ENCODE measurements at regions of chr17 and their contacts with region 1.

Region 1: GRCh38 chr17:58200017-58200633 is 7.6 kb downstream of the EPX start:
- DNase-seq: peak; percentile 47 to 73 (median 71)
- H3K4me3 ChIP-seq: no peak overlapping the region
- H3K27ac ChIP-seq: no peak overlapping the region
- H3K4me1 ChIP-seq: peaks cover 0 to 3% (median 0%) of the 10 kb centered on the region in 4 experiments
- H3K27me3 ChIP-seq: peaks cover 0 to 20% (median 6%) of the 10 kb centered on the region in 5 experiments

Region 2: GRCh38 chr17:58148609-58149008 is 51.5 kb before region 1 on chr17:
- CTCF ChIA-PET with region 1: no interaction called
- POLR2A ChIA-PET with region 1: no interaction called
- DNase-seq: no peak
- H3K4me3 ChIP-seq: no peak overlapping the region
- H3K27ac ChIP-seq: no peak overlapping the region
- H3K4me1 ChIP-seq: peaks cover 5 to 16% (median 13%) of the 10 kb centered on the region in 4 experiments
- H3K27me3 ChIP-seq: peaks cover 0 to 2% (median 0%) of the 10 kb centered on the region in 5 experiments

Region 3: DNA sequence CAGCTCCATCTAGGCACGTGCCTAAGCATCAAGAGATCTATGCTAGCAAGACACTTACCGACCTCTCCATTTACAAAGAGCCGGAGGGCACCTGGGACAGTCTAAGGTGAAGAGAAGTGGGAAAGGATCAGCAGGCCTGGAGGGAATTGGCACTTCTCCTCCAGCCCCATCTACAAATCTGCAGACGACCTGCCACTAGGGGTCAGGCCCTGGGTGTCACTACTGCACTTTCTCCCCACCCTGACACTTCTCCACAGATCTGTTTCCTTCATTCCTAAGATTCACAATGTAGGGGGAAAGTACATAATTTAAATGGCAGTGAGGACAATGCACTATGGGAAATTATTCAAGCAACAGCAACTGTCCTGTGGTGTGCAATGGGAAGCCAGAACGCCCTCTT is 10.8 kb after region 1 on chr17:
- CTCF ChIA-PET with region 1: interaction called, 20 read pairs
- POLR2A ChIA-PET with region 1: no interaction called
- DNase-seq: no peak
- H3K4me3 ChIP-seq: no peak overlapping the region
- H3K27ac ChIP-seq: no peak overlapping the region
- H3K4me1 ChIP-seq: no peaks in the 10 kb centered on the region
- H3K27me3 ChIP-seq: no peaks in the 10 kb centered on the region

Region 4: DNA sequence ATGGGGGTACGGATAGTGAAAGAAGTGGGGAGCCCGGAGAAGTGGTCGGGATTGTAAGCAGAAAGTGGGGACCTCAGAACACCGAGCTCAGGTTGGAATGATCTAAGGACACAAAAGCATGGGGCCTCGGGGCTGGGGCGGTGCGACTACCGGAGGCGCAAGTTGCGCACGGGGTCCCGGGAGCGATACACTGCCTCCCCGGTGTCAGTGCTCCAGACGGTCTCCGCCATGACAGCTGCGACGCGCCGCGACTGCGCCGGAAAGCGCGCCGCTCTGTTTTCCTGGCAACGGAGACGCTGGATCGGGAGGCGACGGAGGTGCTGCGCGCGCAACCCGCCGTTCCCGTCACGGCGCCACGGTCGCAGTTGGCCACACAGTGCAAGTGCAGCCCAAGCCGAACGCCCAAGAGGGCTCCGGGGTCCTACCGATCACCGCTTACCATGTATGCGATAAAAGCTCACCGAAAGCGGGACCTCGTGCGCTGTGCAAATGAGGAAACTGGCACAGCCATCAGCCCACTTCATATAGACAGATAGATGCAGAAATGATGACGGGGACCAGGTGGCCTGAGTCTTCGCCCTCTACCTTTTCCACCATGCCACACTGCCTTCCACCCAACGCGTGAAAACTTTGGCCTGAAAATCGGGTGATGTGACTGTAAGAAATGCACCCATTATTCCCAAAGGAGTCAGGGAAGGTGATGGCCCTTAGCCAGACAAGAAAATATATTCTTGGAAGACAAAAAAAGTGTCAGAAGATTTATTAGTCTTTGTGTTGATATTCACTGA is 19.1 kb after region 1 on chr17 and contains the start of gene MKS1:
- CTCF ChIA-PET with region 1: interaction called, 20 read pairs
- POLR2A ChIA-PET with region 1: interaction called, 5 read pairs
- DNase-seq: peak; percentile 96 to 98 (median 97)
- H3K4me3 ChIP-seq: peak within 1 kb of the TSS; percentile 65 to 97 (median 87)
- H3K27ac ChIP-seq: peak within 1 kb of the TSS; percentile 86 to 94
- H3K4me1 ChIP-seq: peaks cover 6 to 18% (median 14%) of the 10 kb centered on the region in 4 experiments
- H3K27me3 ChIP-seq: no peaks in the 10 kb centered on the region

Measured in common myeloid progenitor, CD34-positive (primary cell).